Activated CD4-positive, alpha-beta memory T cell treated with anti-CD3 and anti-CD28 coated beads for 36 hours (primary cell): ENCODE measurements at regions of chr19 and their contacts with region 1.

Region 1: DNA sequence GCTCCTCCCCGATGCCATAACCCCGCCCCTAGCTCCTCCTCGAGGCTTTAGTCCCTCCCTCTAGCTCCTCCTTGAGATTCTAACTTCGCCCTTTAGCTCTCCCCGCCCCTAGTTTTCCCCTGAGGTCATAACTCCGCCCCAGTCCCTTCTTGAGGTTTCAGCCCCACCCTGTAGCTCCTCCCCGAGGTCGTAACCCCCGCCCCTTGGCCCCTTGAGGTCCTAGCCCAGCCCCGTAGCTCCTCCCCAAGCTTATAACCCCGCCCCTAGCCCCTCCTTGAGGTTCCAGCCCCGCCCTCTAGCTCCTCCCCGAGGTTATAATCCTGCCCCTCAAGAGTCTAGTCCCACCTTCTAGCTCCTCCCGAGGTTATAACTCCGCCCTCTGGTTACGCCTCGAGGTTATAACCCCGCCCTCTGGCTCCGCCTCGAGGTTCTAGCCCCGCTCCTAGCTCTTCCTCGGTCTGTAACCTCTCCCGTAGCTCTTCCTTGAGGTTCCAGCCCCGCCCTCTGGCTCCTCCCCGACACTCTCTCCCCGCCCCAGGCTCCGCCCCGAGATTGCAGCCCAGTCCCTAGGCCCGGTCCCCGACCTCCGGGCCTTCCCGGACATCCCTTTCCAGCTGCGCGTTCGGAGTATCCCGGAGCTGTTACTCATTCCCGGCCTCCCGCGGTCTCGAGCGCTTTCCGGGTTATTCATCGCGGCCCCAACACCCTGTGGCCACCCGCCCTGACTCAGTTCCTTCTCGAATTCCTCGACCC is 1.4 kb downstream of the PLAUR start:
- DNase-seq: peak; percentile 98
- H3K4me3 Mint-ChIP-seq: peak overlapping the region; percentile 81
- H3K27ac Mint-ChIP-seq: peak overlapping the region; percentile 63
- H3K4me1 Mint-ChIP-seq: peaks cover 41% of the 10 kb centered on the region
- H3K27me3 Mint-ChIP-seq: no peaks in the 10 kb centered on the region

Region 2: GRCh38 chr19:43463381-43464136 is 205.0 kb before region 1 on chr19:
- CTCF ChIA-PET with region 1: interaction called, 6 read pairs
- POLR2A ChIA-PET with region 1: no interaction called
- intact Hi-C with region 1: loop called (anchors 1 kb)
- DNase-seq: peak; percentile 100
- H3K4me3 Mint-ChIP-seq: peak overlapping the region; percentile 90
- H3K27ac Mint-ChIP-seq: peak overlapping the region; percentile 82
- H3K4me1 Mint-ChIP-seq: peaks cover 41% of the 10 kb centered on the region
- H3K27me3 Mint-ChIP-seq: no peaks in the 10 kb centered on the region

Region 3: DNA sequence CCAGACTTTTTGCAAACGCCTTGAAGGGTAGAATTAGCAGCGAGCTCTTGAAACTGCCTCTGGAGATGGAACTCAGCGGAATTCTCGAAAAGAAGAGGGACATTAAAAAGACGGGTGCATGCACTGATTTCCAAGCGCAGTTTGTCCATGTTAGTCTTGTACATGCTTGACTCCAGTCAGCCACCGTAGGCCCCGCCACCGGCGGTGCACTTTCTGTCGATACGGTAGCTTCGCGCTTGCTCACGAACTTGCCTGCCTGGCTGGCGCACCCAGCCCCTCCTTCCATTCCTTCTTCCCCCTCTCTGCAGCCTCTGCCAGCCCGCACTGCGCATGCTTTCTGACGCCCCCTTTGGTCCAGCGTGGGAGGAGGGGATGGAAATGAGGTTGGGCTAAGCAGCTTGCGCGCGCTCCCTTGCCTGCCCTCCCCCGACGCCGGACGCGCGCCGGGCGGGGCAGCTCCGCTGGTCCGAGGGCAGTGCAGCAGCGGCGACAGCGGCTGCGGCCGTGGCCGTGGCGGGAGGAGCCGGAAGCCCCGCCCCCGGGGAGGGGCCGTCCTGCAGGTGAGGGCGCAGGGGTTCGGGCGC is 135.5 kb before region 1 on chr19 and contains the start of gene ZNF575:
- CTCF ChIA-PET with region 1: interaction called, 6 read pairs
- POLR2A ChIA-PET with region 1: no interaction called
- intact Hi-C with region 1: loop called (anchors 1 kb)
- DNase-seq: peak; percentile 95
- H3K4me3 Mint-ChIP-seq: peak within 1 kb of the TSS; percentile 82
- H3K27ac Mint-ChIP-seq: peak within 1 kb of the TSS; percentile 94
- H3K4me1 Mint-ChIP-seq: peaks cover 21% of the 10 kb centered on the region
- H3K27me3 Mint-ChIP-seq: no peaks in the 10 kb centered on the region
- total RNA-seq, gene ZNF575: 3.1 to 3.7 TPM

Region 4: GRCh38 chr19:43687660-43687997 is 19.0 kb after region 1 on chr19:
- CTCF ChIA-PET with region 1: no interaction called
- POLR2A ChIA-PET with region 1: no interaction called
- intact Hi-C with region 1: no loop called
- DNase-seq: no peak
- H3K4me3 Mint-ChIP-seq: no peak overlapping the region
- H3K27ac Mint-ChIP-seq: no peak overlapping the region
- H3K4me1 Mint-ChIP-seq: peaks cover 3% of the 10 kb centered on the region
- H3K27me3 Mint-ChIP-seq: no peaks in the 10 kb centered on the region

Region 5: GRCh38 chr19:43700395-43701000 is 31.9 kb after region 1 on chr19:
- CTCF ChIA-PET with region 1: interaction called, 9 read pairs
- POLR2A ChIA-PET with region 1: interaction called, 3 read pairs
- intact Hi-C with region 1: loop called (anchors 1 kb)
- DNase-seq: peak; percentile 37
- H3K4me3 Mint-ChIP-seq: peak overlapping the region; percentile 69
- H3K27ac Mint-ChIP-seq: peak overlapping the region; percentile 98
- H3K4me1 Mint-ChIP-seq: peaks cover 23% of the 10 kb centered on the region
- H3K27me3 Mint-ChIP-seq: no peaks in the 10 kb centered on the region

Region 6: DNA sequence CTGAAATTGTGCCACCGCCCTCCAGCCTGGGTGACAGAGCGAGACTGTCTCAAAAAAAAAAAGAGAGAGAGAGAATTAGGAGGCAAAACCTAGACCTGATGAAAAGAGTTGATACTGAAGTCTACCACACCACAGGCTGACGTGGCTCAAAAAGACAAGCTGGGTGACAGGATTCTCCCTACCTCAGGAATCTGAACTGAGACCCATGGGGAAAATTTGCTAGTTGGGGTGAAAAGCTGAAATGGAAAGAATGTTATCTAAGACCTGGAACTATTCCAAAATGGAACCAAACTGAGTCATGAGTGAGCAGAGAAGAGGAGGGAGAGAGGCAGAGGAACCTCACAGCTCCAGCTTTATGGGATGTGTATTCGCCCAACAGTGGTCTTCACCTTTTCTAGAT is 74.4 kb after region 1 on chr19:
- CTCF ChIA-PET with region 1: interaction called, 13 read pairs
- POLR2A ChIA-PET with region 1: no interaction called
- intact Hi-C with region 1: no loop called
- DNase-seq: no peak
- H3K4me3 Mint-ChIP-seq: no peak overlapping the region
- H3K27ac Mint-ChIP-seq: no peak overlapping the region
- H3K4me1 Mint-ChIP-seq: peaks cover 17% of the 10 kb centered on the region
- H3K27me3 Mint-ChIP-seq: no peaks in the 10 kb centered on the region

Region 7: DNA sequence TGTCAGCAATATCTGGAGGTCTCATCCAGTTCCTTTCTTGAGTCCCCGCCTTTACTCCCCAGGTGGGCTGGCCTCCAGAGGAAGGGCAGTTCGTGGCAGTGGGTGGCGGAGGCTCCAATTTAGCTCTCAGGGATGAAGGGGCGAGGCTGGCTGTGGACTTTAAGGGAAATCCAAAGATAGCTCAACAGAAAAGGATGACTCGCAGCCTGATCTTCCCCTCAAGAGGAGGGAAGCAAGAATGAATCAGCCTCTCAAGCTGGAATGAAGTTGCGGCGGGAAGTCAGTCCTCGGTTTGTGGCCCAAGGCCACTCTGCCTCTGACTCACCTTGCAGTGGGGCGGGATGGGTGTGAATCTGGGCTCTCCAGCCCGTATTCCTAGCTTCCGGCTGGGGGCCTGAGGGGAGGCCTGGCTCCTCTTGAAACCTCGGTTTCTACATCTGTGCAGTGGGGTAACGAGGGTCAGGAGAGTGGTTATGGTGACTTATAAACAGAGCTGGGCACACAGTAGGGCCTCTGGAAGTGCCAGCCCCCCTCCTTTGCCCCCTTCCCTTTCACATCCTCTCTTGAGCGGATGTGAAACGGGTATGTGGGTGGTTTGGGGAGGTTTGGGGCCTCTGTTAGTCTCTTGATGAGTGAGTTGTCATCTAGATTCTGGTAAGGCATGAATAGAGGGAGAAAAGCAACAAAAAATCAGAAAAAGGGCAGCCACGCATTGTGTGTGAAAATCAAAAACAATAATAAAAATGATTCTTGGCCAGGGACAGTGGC is 96.7 kb after region 1 on chr19:
- CTCF ChIA-PET with region 1: interaction called, 11 read pairs
- POLR2A ChIA-PET with region 1: interaction called, 4 read pairs
- intact Hi-C with region 1: loop called (anchors 5 kb)
- DNase-seq: peak; percentile 96
- H3K4me3 Mint-ChIP-seq: peak overlapping the region; percentile 64
- H3K27ac Mint-ChIP-seq: peak overlapping the region; percentile 99
- H3K4me1 Mint-ChIP-seq: peaks cover 82% of the 10 kb centered on the region
- H3K27me3 Mint-ChIP-seq: peaks cover 1% of the 10 kb centered on the region

Region 8: DNA sequence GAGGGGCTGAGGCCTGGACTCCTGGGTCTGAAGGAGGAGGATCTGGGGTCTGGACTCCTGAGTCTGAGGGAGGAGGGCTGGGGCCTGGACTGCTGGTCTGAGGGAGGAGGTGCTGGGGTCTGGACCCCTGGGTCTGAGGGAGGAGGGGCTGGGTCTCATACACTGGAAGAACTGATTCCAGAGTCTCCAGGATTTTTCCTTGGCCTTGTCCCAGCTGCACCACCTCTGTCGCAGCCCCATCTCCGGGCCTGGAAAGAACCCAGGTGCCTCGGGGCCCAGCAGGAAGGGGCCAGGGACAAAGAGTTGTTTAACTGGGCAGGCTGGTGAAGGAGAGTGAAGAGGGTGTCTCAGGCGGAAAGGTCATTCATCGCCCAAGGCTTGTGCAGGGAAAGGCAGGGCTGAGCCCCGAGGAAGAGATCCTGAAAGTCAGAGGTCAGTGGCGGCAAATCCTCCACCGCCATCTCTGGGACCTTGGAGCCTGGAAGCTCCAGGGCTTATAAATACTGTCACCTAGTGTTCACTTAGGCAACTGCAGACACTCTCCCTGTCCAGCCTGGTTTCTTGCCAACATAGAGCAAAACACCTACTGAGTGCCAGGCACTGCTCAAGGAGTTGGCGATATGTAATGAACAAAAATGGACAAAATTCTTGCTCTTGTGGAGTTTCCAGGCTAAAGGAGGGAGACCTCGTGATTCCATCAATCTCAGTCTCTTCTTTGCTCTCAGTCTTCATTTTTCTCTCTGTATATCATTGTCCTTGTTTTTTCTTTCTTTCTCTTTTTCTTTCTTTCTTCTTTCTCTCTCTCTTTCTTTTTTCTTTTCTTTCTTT is 116.6 kb after region 1 on chr19:
- CTCF ChIA-PET with region 1: interaction called, 9 read pairs
- POLR2A ChIA-PET with region 1: interaction called, 11 read pairs
- intact Hi-C with region 1: loop called (anchors 1 kb)
- DNase-seq: peak; percentile 70
- H3K4me3 Mint-ChIP-seq: peak overlapping the region; percentile 75
- H3K27ac Mint-ChIP-seq: peak overlapping the region; percentile 96
- H3K4me1 Mint-ChIP-seq: peaks cover 39% of the 10 kb centered on the region
- H3K27me3 Mint-ChIP-seq: peaks cover 1% of the 10 kb centered on the region

Region 9: GRCh38 chr19:43839139-43839538 is 170.6 kb after region 1 on chr19:
- CTCF ChIA-PET with region 1: no interaction called
- POLR2A ChIA-PET with region 1: no interaction called
- intact Hi-C with region 1: no loop called
- DNase-seq: no peak
- H3K4me3 Mint-ChIP-seq: no peak overlapping the region
- H3K27ac Mint-ChIP-seq: no peak overlapping the region
- H3K4me1 Mint-ChIP-seq: no peaks in the 10 kb centered on the region
- H3K27me3 Mint-ChIP-seq: no peaks in the 10 kb centered on the region